ENCODE measurements at regions of chr2 and their contacts with region 1.

Region 1: DNA sequence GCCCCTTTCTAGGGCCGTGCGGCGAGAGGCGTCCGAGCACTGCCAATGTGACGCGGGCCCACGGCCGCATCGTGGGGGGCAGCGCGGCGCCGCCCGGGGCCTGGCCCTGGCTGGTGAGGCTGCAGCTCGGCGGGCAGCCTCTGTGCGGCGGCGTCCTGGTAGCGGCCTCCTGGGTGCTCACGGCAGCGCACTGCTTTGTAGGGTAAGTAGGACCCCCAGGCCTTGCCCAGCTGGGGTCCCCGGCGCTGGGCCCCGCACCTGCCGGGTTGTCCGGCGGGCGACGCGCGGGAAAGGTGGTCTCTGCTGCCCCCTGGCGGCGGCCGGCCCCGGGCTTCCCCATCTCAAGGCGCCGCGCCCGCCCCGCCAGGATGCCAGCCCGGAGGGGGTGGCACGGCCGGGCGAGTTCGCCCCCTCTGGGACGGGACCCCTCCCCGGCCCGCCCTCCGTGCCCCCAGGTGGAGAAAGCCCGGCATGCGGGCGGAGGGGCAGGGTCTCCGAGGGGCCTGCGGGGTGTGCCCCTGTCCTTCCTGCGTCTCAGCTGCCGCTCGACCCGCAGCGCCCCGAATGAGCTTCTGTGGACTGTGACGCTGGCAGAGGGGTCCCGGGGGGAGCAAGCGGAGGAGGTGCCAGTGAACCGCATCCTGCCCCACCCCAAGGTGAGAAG is 1.9 kb downstream of the PRSS56 start:
- DNase-seq: peak; percentile 22 to 67
- ATAC-seq: peak in 6 of 8 donors; percentile 33 to 68 (median 52)
- H3K4me3 ChIP-seq: peak overlapping the region in 9 of 10 donors; percentile 15 to 38 (median 23)
- H3K27ac ChIP-seq: no peak overlapping the region
- H3K4me1 ChIP-seq: peaks cover 5 to 39% (median 31%) of the 10 kb centered on the region in 9 donors
- H3K27me3 ChIP-seq: peaks cover 20 to 85% (median 80%) of the 10 kb centered on the region in 7 donors
- CTCF ChIP-seq: peak; percentile 81 to 95 (median 92)

Region 2: DNA sequence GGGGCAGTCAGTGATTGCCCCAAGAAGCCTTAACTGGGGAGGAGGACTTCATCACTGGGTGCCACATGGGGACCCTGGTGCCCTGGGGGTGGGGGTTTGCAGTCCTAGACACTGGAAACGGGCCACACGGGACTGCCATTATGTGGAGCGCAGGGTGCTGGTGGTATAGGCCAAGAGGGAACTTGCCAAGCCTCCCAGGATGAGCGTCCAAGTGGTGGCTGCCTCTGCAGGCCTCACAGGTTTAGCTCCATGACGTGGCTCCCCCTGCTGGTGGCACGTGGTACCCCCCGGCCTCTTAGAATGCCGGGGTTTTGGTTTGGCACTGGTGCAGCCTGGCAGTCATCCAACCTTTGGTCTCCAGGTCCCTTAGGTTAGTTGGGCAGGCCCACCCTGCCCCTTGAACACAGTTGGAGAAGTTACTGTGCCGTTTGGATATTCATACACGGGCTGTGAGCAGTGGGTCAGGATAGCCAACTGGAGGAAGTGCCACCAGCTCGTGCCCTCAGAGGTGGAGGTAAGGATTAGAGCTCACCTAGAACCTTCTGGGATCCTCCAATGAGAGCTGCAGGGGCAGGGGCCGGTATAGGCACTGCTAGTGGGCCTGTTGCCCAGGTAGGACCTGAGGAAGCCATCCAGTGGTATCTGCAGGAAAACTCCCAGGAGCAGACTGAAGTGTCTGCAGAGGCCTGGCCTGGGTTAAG is 808.2 kb before region 1 on chr2:
- intact Hi-C with region 1: no loop called
- DNase-seq: peak; percentile 88 to 91
- ATAC-seq: peak; percentile 14 to 64 (median 46)
- H3K4me3 ChIP-seq: no peak overlapping the region
- H3K27ac ChIP-seq: peak overlapping the region in 9 of 10 donors; percentile 17 to 76 (median 54)
- H3K4me1 ChIP-seq: peaks cover 25 to 70% (median 53%) of the 10 kb centered on the region in 9 donors
- H3K27me3 ChIP-seq: no peaks in the 10 kb centered on the region
- CTCF ChIP-seq: peak; percentile 86 to 96 (median 95)

Region 3: GRCh38 chr2:232444409-232445148 is 77.5 kb before region 1 on chr2:
- intact Hi-C with region 1: loop called (anchors 2 to 10 kb)
- DNase-seq: no peak
- ATAC-seq: no peak
- H3K4me3 ChIP-seq: no peak overlapping the region
- H3K27ac ChIP-seq: no peak overlapping the region
- H3K4me1 ChIP-seq: peaks cover 0 to 11% (median 0%) of the 10 kb centered on the region in 9 donors
- H3K27me3 ChIP-seq: peaks cover 0 to 8% (median 0%) of the 10 kb centered on the region in 7 donors
- CTCF ChIP-seq: peak in 8 of 9 donors; percentile 21 to 68 (median 50)